Activated CD8-positive, alpha-beta T cell treated with anti-CD3 and anti-CD28 coated beads for 36 hours (primary cell): ENCODE measurements at regions of chr2 and their contacts with region 1.

Region 1: GRCh38 chr2:96951093-96951654 is 35.2 kb downstream of the FAM178B start:
- DNase-seq: peak; percentile 78
- ATAC-seq: peak; percentile 93
- H3K4me3 Mint-ChIP-seq: no peak overlapping the region
- H3K27ac Mint-ChIP-seq: no peak overlapping the region
- H3K4me1 Mint-ChIP-seq: peaks cover 18% of the 10 kb centered on the region
- H3K27me3 Mint-ChIP-seq: no peaks in the 10 kb centered on the region
- CTCF ChIP-seq: peak; percentile 95

Region 2: DNA sequence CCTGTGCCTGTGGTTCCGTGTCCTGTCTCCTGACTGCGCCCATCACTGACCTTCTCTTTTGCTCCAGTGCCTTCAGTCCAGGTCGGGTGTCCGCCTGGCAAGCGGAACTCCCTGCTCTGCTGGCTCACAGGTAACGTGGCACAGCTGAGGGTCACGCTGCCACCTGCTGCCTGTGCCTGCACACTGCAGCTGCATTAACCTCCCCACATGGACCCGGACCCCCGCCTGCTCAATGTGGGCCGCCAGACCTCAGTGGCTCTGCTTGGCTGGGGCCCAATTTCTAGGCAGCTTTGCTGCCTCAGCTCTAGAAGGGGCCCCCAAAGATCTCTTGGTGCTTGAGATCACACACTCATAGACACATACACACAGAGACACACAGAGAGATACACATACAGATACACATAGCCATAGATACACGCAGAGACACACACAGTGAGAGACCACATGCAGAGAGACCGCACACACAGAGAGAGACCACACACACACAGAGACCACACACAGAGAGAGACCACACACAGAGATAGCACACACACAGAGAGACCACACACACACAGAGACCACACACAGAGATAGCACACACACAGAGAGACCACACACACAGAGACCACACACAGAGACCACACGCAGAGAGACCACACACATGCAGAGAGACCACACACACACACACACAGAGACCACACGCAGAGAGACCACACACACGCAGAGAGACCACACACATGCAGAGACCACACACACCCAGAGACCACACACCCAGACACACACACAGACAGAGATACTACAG is 150.0 kb before region 1 on chr2:
- CTCF ChIA-PET with region 1: interaction called, 10 read pairs
- POLR2A ChIA-PET with region 1: no interaction called
- intact Hi-C with region 1: no loop called
- DNase-seq: peak; percentile 84
- ATAC-seq: peak; percentile 98
- H3K4me3 Mint-ChIP-seq: no peak overlapping the region
- H3K27ac Mint-ChIP-seq: no peak overlapping the region
- H3K4me1 Mint-ChIP-seq: peaks cover 3% of the 10 kb centered on the region
- H3K27me3 Mint-ChIP-seq: no peaks in the 10 kb centered on the region
- CTCF ChIP-seq: peak; percentile 90

Region 3: DNA sequence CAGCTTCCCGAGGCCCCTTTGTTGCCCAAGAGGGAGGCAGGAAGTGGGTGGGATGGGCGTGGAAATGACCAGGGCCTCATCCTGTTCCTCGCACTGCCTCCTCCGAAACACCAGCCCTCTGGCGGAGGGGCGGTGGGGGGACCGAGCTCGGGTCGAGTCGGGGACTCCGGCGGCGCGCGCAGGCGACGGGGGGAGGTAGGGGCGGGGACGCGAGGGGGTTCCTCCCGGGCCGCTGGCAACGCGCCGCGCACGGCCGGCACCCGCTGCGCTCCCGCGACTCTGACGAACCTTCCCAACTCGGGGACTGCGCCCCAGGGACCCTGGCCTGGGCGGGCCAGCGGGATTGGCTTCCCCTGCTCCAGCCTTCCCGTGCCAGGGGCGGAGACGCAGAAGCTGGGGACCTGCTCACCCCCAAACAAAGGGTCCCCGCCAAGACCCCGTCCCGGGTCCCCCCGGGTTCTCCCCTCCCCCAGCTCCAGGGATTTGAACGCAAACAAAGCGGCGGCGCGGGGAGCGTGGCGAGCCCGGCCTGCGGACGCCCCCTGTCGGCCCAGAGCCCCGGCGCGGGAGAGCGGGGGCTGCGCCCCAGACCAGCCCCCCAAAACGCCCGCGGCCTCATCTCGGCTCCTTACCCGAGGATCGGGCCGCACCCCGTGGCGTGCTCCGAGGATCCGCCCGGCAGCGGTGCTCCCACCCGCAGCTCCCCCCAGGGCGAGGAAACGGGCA is 82.5 kb before region 1 on chr2:
- CTCF ChIA-PET with region 1: interaction called, 61 read pairs
- POLR2A ChIA-PET with region 1: interaction called, 4 read pairs
- intact Hi-C with region 1: no loop called
- DNase-seq: peak; percentile 81
- ATAC-seq: peak; percentile 65
- H3K4me3 Mint-ChIP-seq: peak overlapping the region; percentile 78
- H3K27ac Mint-ChIP-seq: peak overlapping the region; percentile 82
- H3K4me1 Mint-ChIP-seq: peaks cover 38% of the 10 kb centered on the region
- H3K27me3 Mint-ChIP-seq: peaks cover 3% of the 10 kb centered on the region
- CTCF ChIP-seq: peak; percentile 62

Region 4: GRCh38 chr2:96881349-96882195 is 69.6 kb before region 1 on chr2:
- CTCF ChIA-PET with region 1: interaction called, 11 read pairs
- POLR2A ChIA-PET with region 1: no interaction called
- intact Hi-C with region 1: no loop called
- DNase-seq: no peak
- ATAC-seq: no peak
- H3K4me3 Mint-ChIP-seq: no peak overlapping the region
- H3K27ac Mint-ChIP-seq: no peak overlapping the region
- H3K4me1 Mint-ChIP-seq: no peaks in the 10 kb centered on the region
- H3K27me3 Mint-ChIP-seq: no peaks in the 10 kb centered on the region
- CTCF ChIP-seq: no peak

Region 5: DNA sequence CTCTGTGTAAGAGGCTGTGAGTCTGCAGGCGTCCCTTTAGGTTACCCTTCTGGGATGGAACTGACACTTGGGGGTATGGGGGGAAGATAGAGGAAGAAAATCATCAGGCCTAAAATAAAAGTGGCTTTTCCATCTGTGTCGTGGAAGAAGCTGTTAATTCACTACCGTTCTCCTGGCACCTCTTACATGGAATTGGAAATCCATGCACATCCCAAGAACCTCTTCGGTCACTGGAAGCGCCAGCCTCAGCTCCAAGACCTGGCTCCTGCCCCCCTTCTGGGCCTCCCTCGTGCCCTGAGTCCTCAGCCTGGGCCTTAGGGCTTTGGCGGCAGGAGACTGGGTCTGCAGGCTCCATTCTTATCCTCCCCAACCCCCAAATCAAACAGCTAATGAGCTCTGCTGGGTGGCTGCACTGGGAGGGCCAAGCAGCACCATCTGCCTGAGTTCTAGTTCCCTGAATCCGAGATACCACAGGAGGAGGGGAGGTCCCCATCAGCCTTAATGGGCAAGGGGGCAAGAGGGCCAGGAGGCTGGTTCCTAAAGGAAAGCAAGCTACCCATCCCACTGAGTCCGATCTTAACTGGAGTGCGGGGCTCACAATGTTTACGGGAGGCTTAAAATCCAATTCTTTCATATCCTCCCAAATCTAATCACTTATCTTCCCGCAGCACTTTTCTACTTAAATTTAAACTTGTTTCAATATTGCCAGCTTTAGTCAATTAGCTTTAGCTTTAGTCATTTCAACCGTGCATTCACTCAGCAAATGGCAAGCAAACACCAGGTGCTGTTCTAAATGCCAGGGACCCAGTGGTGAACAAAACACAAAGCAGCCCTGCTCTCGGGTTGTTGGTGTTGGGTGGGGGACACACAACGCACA is 17.6 kb before region 1 on chr2:
- CTCF ChIA-PET with region 1: interaction called, 25 read pairs
- POLR2A ChIA-PET with region 1: no interaction called
- intact Hi-C with region 1: no loop called
- DNase-seq: no peak
- ATAC-seq: no peak
- H3K4me3 Mint-ChIP-seq: no peak overlapping the region
- H3K27ac Mint-ChIP-seq: no peak overlapping the region
- H3K4me1 Mint-ChIP-seq: peaks cover 2% of the 10 kb centered on the region
- H3K27me3 Mint-ChIP-seq: no peaks in the 10 kb centered on the region
- CTCF ChIP-seq: no peak

Region 6: GRCh38 chr2:96940001-96940615 is 11.1 kb before region 1 on chr2:
- CTCF ChIA-PET with region 1: interaction called, 38 read pairs
- POLR2A ChIA-PET with region 1: no interaction called
- intact Hi-C with region 1: no loop called
- DNase-seq: no peak
- ATAC-seq: no peak
- H3K4me3 Mint-ChIP-seq: no peak overlapping the region
- H3K27ac Mint-ChIP-seq: no peak overlapping the region
- H3K4me1 Mint-ChIP-seq: peaks cover 22% of the 10 kb centered on the region
- H3K27me3 Mint-ChIP-seq: no peaks in the 10 kb centered on the region
- CTCF ChIP-seq: no peak